ENCODE measurements at regions of chr22 and their contacts with region 1.

Region 1: GRCh38 chr22:20981787-20982562 is at the start of gene LZTR1:
- DNase-seq: peak; percentile 80
- ATAC-seq: peak; percentile 80
- H3K4me3 Mint-ChIP-seq: peak within 1 kb of the TSS; percentile 93
- H3K27ac Mint-ChIP-seq: peak within 1 kb of the TSS; percentile 95
- H3K4me1 Mint-ChIP-seq: peaks cover 38% of the 10 kb centered on the region
- H3K27me3 Mint-ChIP-seq: peaks cover 2% of the 10 kb centered on the region
- total RNA-seq, gene LZTR1: 56.2 to 58.0 TPM

Region 2: GRCh38 chr22:21001560-21002325 is 19.8 kb after region 1 on chr22 and contains the start of gene THAP7:
- CTCF ChIA-PET with region 1: interaction called, 6 read pairs
- POLR2A ChIA-PET with region 1: interaction called, 17 read pairs
- DNase-seq: peak; percentile 98
- ATAC-seq: peak; percentile 94
- H3K4me3 Mint-ChIP-seq: peak within 1 kb of the TSS; percentile 92
- H3K27ac Mint-ChIP-seq: peak within 1 kb of the TSS; percentile 97
- H3K4me1 Mint-ChIP-seq: peaks cover 29% of the 10 kb centered on the region
- H3K27me3 Mint-ChIP-seq: no peaks in the 10 kb centered on the region
- total RNA-seq, gene THAP7: 31.7 to 32.0 TPM